ENCODE measurements at regions of chr15 and their contacts with region 1.

Region 1: DNA sequence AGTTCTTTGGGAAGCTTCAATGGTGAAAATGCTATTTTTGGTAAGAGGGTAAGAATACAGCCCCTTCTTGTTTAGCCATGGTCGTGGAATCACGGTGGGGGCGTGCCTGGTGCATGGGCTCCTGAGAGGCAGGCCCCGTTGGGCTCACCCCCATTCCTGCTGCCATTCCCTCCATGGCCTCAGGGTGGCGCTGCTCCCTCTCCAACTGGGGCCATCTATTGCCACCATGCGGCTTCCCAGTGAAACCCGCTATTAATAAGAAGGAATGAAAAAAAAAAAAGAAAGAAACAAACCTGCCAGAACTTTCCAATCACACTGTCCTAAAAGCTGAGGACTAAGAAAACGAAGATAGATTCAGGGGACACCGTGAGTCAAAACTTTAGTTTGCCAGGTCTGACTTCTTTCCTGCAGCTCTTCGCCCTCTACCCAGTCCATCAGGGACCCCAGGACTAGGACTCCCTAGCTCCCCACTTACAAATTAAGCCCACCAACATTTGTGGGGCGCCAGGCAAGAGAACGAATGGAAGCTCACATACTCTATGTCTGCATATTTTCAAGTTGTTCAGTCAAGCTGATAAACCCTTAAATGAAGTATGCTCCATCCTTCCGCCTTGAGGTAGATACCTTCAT is 30.6 kb upstream of the ABHD2 start:
- DNase-seq: peak; percentile 89 to 93 (median 91)
- ATAC-seq: peak; percentile 96
- H3K4me3 ChIP-seq: no peak overlapping the region
- H3K27ac ChIP-seq: no peak overlapping the region
- H3K4me1 ChIP-seq: peaks cover 8 to 14% of the 10 kb centered on the region in 2 experiments; a peak in 3 of 5 replicates
- H3K27me3 ChIP-seq: no peaks in the 10 kb centered on the region
- CTCF ChIP-seq: peak; percentile 99 to 100 (median 100)
- EP300 ChIP-seq: no peak
- POLR2A ChIP-seq: no peak
- RAD21 ChIP-seq: peak; percentile 97 to 98

Region 2: DNA sequence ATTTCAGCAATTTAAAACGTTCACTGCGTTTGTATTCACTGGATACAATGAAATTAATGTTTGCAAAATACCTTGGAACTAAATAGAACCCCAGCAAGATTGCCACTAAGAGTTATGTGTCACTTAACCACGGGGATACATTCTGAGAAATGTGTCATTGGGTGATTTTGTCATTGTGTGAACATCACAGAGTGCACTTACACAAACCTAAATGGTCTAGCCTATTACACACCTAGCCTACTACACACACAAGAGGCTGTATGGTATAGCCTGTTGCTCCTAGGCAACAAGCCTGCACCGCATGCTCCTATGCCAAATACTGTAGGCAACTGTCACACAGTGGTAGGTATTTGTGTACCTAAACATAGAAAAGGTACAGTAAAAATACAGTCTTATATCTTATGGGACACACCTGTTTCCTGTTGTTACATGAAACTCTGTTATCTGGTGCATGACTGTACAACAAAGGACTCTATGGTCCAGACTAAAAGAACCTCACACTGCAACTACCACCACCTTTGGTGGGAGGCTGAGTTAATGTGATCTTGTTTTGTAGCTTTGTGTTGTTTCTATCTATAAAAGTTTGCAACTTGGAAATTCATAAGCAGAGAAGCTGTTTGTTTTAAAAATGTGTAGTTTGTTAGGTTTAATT is 708.9 kb before region 1 on chr15:
- CTCF ChIA-PET with region 1: no interaction called
- POLR2A ChIA-PET with region 1: no interaction called
- in situ Hi-C with region 1: no loop called
- intact Hi-C with region 1: no loop called
- DNase-seq: no peak
- ATAC-seq: no peak
- H3K4me3 ChIP-seq: no peak overlapping the region
- H3K27ac ChIP-seq: no peak overlapping the region
- H3K4me1 ChIP-seq: no peaks in the 10 kb centered on the region
- H3K27me3 ChIP-seq: peaks cover 0 to 2% of the 10 kb centered on the region in 2 experiments; a peak in 1 of 5 replicates
- CTCF ChIP-seq: no peak
- EP300 ChIP-seq: no peak
- POLR2A ChIP-seq: no peak
- RAD21 ChIP-seq: no peak

Region 3: GRCh38 chr15:89043031-89044002 is 14.3 kb before region 1 on chr15:
- CTCF ChIA-PET with region 1: no interaction called
- POLR2A ChIA-PET with region 1: no interaction called
- in situ Hi-C with region 1: no loop called
- intact Hi-C with region 1: no loop called
- DNase-seq: no peak
- ATAC-seq: no peak
- H3K4me3 ChIP-seq: no peak overlapping the region
- H3K27ac ChIP-seq: no peak overlapping the region
- H3K4me1 ChIP-seq: peaks cover 0 to 8% of the 10 kb centered on the region in 2 experiments; a peak in 3 of 5 replicates
- H3K27me3 ChIP-seq: peaks cover under 1 to 3% of the 10 kb centered on the region in 2 experiments; a peak in 2 of 5 replicates
- CTCF ChIP-seq: no peak
- EP300 ChIP-seq: no peak
- POLR2A ChIP-seq: no peak
- RAD21 ChIP-seq: no peak

Region 4: GRCh38 chr15:89129123-89129815 is 71.7 kb after region 1 on chr15:
- CTCF ChIA-PET with region 1: interaction called, 58 read pairs
- POLR2A ChIA-PET with region 1: interaction called, 3 read pairs
- in situ Hi-C with region 1: loop called (anchors 5 kb)
- intact Hi-C with region 1: loop called (anchors 1 kb)
- DNase-seq: peak; percentile 55 to 65 (median 59)
- ATAC-seq: peak; percentile 90
- H3K4me3 ChIP-seq: no peak overlapping the region
- H3K27ac ChIP-seq: no peak overlapping the region
- H3K4me1 ChIP-seq: peaks cover 0 to 18% of the 10 kb centered on the region in 2 experiments; a peak in 2 of 5 replicates
- H3K27me3 ChIP-seq: no peaks in the 10 kb centered on the region
- CTCF ChIP-seq: peak; percentile 81 to 90 (median 84)
- EP300 ChIP-seq: no peak
- POLR2A ChIP-seq: no peak
- RAD21 ChIP-seq: peak; percentile 63 to 74

Region 5: DNA sequence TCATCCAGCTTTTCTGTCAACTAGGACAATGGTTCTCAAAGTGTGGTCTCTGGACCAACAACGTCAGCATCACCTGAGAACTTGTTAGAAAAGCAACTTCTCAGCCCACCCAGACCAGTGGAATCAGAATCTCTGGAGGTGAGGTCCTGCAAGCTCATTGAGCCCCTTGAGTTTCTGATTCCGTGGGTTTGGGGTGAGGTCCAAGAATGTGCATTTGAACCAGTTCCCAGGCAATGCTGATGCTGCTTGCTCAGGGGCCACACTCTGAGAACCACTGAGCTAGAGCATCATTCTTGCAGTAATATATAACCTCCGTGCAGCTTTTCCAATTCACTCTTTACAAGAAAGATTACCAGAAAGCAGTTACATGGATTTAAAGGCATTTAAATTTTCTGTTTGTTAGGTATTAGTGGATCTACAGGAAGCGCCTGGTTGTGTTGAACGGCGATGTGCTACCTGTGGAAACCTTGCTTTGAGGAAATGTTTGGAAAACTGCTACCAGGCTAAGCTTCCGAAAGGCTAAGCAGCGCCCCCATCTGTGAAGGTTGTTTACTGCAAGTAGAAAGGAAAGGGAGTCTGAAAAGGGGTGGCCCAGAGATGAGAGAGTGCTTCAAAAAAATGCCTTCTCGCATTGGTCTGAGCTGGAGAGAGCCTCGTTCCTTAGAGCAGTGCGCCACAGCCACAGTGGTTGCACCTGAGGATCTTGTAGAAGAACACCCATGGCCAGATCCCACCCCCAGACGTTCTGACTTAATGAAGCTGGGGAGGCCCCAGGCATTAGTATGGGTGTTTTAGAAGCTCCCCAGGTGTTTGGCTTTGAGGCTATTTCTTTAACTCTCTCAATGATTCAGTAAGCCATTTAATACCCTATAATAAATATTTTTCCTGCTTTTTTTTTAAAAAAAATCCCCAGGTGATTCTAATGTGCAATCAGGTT is 113.8 kb after region 1 on chr15:
- CTCF ChIA-PET with region 1: interaction called, 18 read pairs
- POLR2A ChIA-PET with region 1: interaction called, 3 read pairs
- in situ Hi-C with region 1: loop called (anchors 5 kb)
- intact Hi-C with region 1: loop called (anchors 1 kb)
- DNase-seq: peak; percentile 55 to 71 (median 68)
- ATAC-seq: peak; percentile 86
- H3K4me3 ChIP-seq: no peak overlapping the region
- H3K27ac ChIP-seq: no peak overlapping the region
- H3K4me1 ChIP-seq: peaks cover 0 to 14% of the 10 kb centered on the region in 2 experiments; a peak in 2 of 5 replicates
- H3K27me3 ChIP-seq: no peaks in the 10 kb centered on the region
- CTCF ChIP-seq: peak; percentile 75 to 83 (median 79)
- EP300 ChIP-seq: no peak
- POLR2A ChIP-seq: no peak
- RAD21 ChIP-seq: peak; percentile 49 to 80

Region 6: DNA sequence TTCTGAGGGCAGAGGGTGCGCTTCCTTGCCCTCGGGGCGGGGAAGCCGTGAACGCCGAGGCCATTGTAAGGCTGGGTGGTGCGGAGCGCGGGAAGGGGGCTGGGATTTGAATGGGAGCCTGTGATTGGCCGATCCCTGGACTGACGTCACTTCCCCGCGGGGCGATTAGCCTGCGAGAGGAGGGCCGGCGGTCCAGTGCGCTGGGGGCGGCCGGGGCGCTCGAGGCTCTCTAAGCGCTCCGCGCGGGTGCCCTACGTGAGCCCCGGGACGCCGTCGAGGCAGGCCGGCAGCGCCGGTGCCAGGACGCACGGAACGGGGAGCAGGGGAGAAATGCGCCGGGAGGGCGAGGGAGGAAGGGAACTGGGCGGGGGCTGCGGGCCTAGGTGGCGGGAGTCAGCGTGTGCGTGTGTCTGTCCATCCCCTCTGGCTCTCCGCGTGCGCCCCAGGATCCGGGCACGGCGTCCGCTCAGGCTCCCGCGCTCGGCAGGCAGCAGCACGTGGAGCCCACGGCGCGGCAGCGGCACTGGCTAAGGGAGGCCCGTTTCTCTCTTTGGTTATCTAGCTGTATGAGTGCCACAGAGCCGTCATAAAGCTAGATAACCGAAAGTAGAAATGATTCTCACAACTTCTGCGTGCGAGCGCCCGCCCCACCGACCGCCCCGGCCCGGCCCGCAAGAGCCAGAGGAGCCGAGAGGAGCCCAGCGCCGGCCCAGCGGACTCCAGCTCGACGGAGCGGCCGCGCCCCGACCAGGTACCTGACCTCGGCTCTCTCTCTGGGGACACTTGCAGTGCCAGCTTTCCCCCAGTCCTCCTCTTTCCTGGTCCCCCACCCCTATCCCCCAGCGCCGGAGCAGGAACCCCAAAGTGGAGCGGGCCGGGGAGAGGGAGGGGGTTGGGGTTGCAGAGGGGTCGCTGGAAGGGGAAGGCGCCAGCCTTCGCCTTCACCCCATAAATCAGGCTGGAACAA is 310.1 kb after region 1 on chr15:
- CTCF ChIA-PET with region 1: no interaction called
- POLR2A ChIA-PET with region 1: no interaction called
- in situ Hi-C with region 1: no loop called
- intact Hi-C with region 1: no loop called
- DNase-seq: peak; percentile 80 to 95 (median 94)
- ATAC-seq: peak; percentile 96
- H3K4me3 ChIP-seq: peak overlapping the region; percentile 29
- H3K27ac ChIP-seq: no peak overlapping the region
- H3K4me1 ChIP-seq: peaks cover 0 to 22% of the 10 kb centered on the region in 2 experiments; a peak in 3 of 5 replicates
- H3K27me3 ChIP-seq: peaks cover 68 to 94% of the 10 kb centered on the region in 2 experiments
- CTCF ChIP-seq: no peak
- EP300 ChIP-seq: no peak
- POLR2A ChIP-seq: no peak
- RAD21 ChIP-seq: no peak